ENCODE measurements at regions of chr1 and their contacts with region 1.

Region 1: DNA sequence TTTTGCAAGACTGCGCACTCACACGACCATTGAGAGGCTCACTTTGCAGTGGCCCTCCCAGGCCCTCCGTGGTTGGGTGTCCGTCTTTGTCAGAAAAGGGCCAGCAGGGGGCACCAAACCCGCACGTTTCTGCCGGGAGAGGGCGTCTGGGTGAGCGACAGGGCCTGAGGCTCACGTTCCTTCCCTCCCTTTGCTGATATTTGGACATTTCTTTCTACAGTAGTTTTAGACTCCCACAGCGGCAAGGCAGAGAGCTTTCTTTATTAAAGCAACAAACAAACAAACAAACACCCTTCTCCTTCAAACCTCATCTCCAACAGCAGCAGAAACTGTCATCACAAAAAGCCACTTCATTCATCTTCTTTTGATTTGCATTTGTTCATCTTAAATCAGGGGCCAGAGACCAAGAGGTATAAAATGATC is 79.2 kb upstream of the WDR26 start:
- DNase-seq: peak; percentile 97
- H3K4me3 Mint-ChIP-seq: no peak overlapping the region
- H3K27ac Mint-ChIP-seq: no peak overlapping the region
- H3K4me1 Mint-ChIP-seq: peaks cover 14% of the 10 kb centered on the region
- H3K27me3 Mint-ChIP-seq: no peaks in the 10 kb centered on the region
- CTCF ChIP-seq: peak; percentile 100

Region 2: GRCh38 chr1:224407571-224408560 is 105.9 kb before region 1 on chr1:
- CTCF ChIA-PET with region 1: no interaction called
- POLR2A ChIA-PET with region 1: no interaction called
- intact Hi-C with region 1: no loop called
- DNase-seq: peak; percentile 86
- H3K4me3 Mint-ChIP-seq: no peak overlapping the region
- H3K27ac Mint-ChIP-seq: peak overlapping the region; percentile 7
- H3K4me1 Mint-ChIP-seq: peaks cover 25% of the 10 kb centered on the region
- H3K27me3 Mint-ChIP-seq: no peaks in the 10 kb centered on the region
- CTCF ChIP-seq: no peak

Region 3: GRCh38 chr1:224497714-224498573 is 15.9 kb before region 1 on chr1:
- CTCF ChIA-PET with region 1: interaction called, 84 read pairs
- POLR2A ChIA-PET with region 1: interaction called, 4 read pairs
- intact Hi-C with region 1: no loop called
- DNase-seq: peak; percentile 97
- H3K4me3 Mint-ChIP-seq: peak overlapping the region; percentile 50
- H3K27ac Mint-ChIP-seq: peak overlapping the region; percentile 86
- H3K4me1 Mint-ChIP-seq: peaks cover 69% of the 10 kb centered on the region
- H3K27me3 Mint-ChIP-seq: no peaks in the 10 kb centered on the region
- CTCF ChIP-seq: peak; percentile 6

Region 4: DNA sequence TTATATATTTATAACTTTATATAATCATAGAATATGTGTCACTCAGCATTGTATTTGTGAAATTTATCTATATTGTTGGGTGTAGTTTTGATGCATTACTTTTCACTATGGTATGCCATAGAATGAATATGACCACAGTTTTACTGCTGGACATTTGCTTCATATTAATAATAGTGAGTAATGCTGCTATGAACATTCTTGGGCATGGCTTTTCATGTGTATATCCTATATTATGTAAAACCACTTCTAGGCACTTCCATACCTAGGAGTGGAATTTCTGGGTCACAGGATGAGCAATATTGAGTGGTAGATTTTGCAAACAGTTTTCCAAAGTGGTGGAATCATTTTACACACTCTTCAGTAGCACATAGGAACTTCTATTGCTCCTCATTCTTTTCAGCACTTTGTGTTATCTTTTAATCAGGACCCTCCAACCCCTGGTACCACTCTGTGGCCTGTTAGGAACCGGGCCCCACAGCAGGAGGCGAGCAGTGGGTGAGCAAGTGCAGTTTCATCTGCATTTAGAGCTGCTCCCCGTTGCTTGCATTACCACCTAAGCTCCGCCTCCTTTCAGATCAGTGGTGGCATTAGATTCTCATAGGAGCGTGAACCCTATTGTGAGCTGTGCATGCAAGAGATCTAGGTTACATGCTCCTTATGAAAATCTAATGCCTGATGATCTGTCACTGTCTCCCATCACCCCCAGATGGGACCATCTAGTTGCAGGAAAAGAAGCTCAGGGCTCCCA is 46.4 kb after region 1 on chr1:
- CTCF ChIA-PET with region 1: interaction called, 23 read pairs
- POLR2A ChIA-PET with region 1: interaction called, 3 read pairs
- intact Hi-C with region 1: loop called (anchors 2 kb)
- DNase-seq: no peak
- H3K4me3 Mint-ChIP-seq: no peak overlapping the region
- H3K27ac Mint-ChIP-seq: peak overlapping the region; percentile 14
- H3K4me1 Mint-ChIP-seq: peaks cover 35% of the 10 kb centered on the region
- H3K27me3 Mint-ChIP-seq: no peaks in the 10 kb centered on the region
- CTCF ChIP-seq: no peak

Region 5: DNA sequence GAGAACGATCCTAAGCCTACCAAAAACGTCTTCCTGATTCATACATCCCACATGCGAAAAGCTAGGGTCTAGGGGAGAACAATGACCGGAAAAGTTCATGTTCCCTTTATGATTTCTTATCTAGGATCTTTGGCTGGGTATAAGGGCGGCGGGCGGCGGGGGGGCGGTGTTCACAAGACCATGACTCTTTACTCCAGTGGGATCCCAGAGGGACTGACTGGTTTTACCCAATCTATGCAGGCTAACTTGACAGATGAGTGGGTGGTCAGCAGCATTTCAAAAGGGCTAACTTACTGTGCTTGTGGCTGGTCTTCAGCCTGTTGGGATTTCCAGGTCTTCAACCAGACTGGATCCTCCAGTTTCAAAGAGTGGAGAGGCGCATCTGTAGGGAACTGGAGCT is 142.6 kb after region 1 on chr1:
- CTCF ChIA-PET with region 1: interaction called, 16 read pairs
- POLR2A ChIA-PET with region 1: no interaction called
- intact Hi-C with region 1: no loop called
- DNase-seq: no peak
- H3K4me3 Mint-ChIP-seq: no peak overlapping the region
- H3K27ac Mint-ChIP-seq: no peak overlapping the region
- H3K4me1 Mint-ChIP-seq: peaks cover 12% of the 10 kb centered on the region
- H3K27me3 Mint-ChIP-seq: no peaks in the 10 kb centered on the region
- CTCF ChIP-seq: no peak

Region 6: DNA sequence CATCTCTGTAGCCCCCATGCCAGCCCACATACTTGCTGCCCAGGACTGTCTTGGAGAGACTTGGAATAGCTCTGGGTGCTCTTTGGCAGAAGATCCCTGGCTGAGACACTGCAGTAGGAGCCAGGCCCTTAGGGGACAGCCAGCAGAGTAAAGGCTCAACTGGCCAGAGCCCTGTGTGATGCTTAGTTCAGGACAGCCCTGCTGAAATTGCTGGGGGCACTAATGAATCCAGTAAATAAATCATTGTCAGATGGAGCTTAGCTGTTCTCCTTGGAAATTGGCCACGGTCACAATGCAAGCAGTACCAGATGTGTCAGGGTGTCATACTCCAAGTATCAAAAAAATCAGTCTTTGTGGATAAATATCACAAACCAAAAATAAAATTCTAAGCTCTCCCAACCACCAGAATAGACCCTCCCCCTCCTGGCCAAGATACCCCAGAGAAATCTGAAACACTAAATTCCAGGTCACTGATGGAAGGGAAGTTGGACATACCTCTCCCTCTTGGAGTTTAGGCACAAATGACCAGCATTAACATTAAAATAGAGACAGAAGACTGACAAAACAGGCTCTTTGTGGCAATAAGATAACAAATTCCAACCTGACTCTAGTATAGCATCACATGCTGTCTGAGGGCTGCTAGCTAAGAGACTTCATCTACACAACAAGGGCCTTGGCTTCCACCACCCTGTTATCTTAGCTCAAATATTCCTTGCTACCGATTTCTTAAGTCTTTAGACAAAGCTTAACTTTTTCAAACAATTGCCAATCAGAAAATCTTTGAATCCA is 332.5 kb after region 1 on chr1:
- CTCF ChIA-PET with region 1: interaction called, 624 read pairs
- POLR2A ChIA-PET with region 1: interaction called, 7 read pairs
- intact Hi-C with region 1: no loop called
- DNase-seq: no peak
- H3K4me3 Mint-ChIP-seq: no peak overlapping the region
- H3K27ac Mint-ChIP-seq: no peak overlapping the region
- H3K4me1 Mint-ChIP-seq: no peaks in the 10 kb centered on the region
- H3K27me3 Mint-ChIP-seq: no peaks in the 10 kb centered on the region
- CTCF ChIP-seq: no peak

Region 7: GRCh38 chr1:224901087-224901810 is 387.5 kb after region 1 on chr1:
- CTCF ChIA-PET with region 1: interaction called, 60 read pairs
- POLR2A ChIA-PET with region 1: interaction called, 4 read pairs
- intact Hi-C with region 1: no loop called
- DNase-seq: no peak
- H3K4me3 Mint-ChIP-seq: no peak overlapping the region
- H3K27ac Mint-ChIP-seq: no peak overlapping the region
- H3K4me1 Mint-ChIP-seq: no peaks in the 10 kb centered on the region
- H3K27me3 Mint-ChIP-seq: peaks cover 56% of the 10 kb centered on the region
- CTCF ChIP-seq: no peak

Region 8: GRCh38 chr1:225474986-225475820 is 961.4 kb after region 1 on chr1:
- CTCF ChIA-PET with region 1: no interaction called
- POLR2A ChIA-PET with region 1: no interaction called
- intact Hi-C with region 1: no loop called
- DNase-seq: peak; percentile 85
- H3K4me3 Mint-ChIP-seq: no peak overlapping the region
- H3K27ac Mint-ChIP-seq: no peak overlapping the region
- H3K4me1 Mint-ChIP-seq: no peaks in the 10 kb centered on the region
- H3K27me3 Mint-ChIP-seq: no peaks in the 10 kb centered on the region
- CTCF ChIP-seq: peak; percentile 100